Activated T-helper 2 cell treated with anti-CD3 and anti-CD28 coated beads, Interferon-gamma antibody, Interleukin-2, Interleukin-4, amounts not matched to agents 10 μg/mL and 5 μg/mL and 100 μg/mL, durations not matched to agents 14 hours and 24 hours and 36 hours (primary cell): ENCODE measurements at regions of chr1 and their contacts with region 1.

Region 1: DNA sequence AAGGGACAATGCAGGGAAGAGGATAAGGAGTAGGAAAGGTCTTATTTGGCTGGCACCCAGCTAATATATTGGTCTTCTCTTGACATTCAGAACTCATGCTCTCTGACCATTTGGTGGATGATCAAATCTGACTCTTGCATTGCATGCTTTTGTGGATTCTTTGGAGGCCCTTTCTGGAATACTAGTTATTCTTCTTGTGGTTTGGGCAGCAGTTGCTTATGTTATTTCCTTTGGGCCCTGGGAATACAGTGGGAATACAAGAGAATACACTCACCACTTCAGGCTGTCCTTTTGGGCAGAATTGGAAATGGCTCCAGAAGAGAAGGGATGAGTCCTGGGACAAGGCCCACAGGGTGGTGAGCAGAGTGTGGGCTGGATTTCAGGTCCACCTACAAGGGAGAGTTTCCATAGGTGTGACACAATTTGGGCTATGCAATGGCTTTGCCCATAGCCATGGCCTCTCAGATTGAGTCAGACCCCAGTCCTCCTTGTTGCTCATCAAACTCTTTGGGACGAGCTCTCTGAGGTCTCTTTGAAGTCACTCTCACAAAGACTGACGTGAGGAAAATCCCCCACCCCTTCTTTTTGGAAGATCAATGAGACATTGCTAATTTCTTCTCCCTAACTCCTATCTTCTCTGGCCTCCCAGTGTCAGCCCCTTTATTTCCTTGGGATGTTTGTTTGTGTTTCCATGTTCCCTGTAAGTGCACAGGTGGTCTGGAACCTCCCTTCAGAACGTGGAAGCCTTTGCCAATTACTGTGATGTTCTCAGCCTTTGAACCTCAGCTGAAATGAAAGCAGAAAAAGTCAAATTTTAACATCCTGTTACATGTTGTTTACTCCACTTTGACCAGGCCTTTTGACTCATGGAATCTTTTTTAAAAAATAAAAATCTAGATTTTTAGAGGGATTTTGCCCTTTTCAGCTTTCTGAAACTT is 19.4 kb downstream of the HSD11B1 start:
- DNase-seq: peak; percentile 16
- H3K4me3 Mint-ChIP-seq: peak overlapping the region; percentile 60
- H3K27ac Mint-ChIP-seq: peak overlapping the region; percentile 100
- H3K4me1 Mint-ChIP-seq: peaks cover 67% of the 10 kb centered on the region
- H3K27me3 Mint-ChIP-seq: no peaks in the 10 kb centered on the region

Region 2: GRCh38 chr1:209202830-209203439 is 521.1 kb before region 1 on chr1:
- intact Hi-C with region 1: no loop called
- DNase-seq: no peak
- H3K4me3 Mint-ChIP-seq: no peak overlapping the region
- H3K27ac Mint-ChIP-seq: no peak overlapping the region
- H3K4me1 Mint-ChIP-seq: peaks cover 1% of the 10 kb centered on the region
- H3K27me3 Mint-ChIP-seq: peaks cover 16% of the 10 kb centered on the region

Region 3: DNA sequence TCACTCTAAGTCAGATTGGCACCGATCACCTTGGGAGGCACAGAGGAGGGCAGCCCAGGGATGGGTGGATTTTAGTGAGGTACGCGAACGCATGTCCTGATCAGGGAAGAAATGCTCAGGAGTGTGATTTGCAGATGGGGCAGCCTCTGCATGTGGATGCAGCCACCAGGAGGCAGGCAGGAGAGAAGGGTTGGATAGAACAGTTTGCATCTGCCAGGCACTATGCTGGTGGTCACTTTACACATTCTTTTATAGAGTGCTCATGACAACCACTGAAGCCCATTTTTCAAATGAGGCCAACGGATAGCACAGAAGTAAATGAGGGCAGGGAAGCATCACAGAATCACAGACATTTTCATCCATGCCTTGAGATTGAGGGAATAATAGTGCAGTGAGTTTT is 77.5 kb before region 1 on chr1:
- intact Hi-C with region 1: no loop called
- DNase-seq: no peak
- H3K4me3 Mint-ChIP-seq: no peak overlapping the region
- H3K27ac Mint-ChIP-seq: peak overlapping the region; percentile 36
- H3K4me1 Mint-ChIP-seq: peaks cover 40% of the 10 kb centered on the region
- H3K27me3 Mint-ChIP-seq: no peaks in the 10 kb centered on the region

Region 4: DNA sequence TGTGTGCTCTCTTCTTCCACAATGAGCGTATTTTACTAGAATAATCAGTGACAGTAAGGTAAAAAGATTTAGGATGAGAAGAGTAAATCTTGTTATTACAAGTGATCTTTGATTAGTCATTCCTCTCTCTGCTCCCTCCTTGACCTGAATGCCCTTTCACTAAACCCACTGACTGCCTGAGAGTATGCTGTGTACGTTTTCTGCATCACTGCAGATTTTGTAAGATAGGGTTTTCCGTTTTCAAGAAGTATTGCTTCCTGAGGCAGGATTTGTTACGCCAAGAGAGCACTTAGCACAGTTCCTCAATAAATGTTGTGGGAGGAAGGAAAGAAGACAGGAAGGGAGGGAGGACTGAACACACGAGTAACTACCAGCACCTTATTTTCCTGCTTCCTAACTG is 64.1 kb before region 1 on chr1:
- intact Hi-C with region 1: loop called (anchors 2 kb)
- DNase-seq: no peak
- H3K4me3 Mint-ChIP-seq: peak overlapping the region; percentile 16
- H3K27ac Mint-ChIP-seq: peak overlapping the region; percentile 79
- H3K4me1 Mint-ChIP-seq: peaks cover 25% of the 10 kb centered on the region
- H3K27me3 Mint-ChIP-seq: no peaks in the 10 kb centered on the region

Region 5: GRCh38 chr1:209736490-209737117 is 12.6 kb after region 1 on chr1:
- intact Hi-C with region 1: loop called (anchors 1 kb)
- DNase-seq: no peak
- H3K4me3 Mint-ChIP-seq: no peak overlapping the region
- H3K27ac Mint-ChIP-seq: peak overlapping the region; percentile 93
- H3K4me1 Mint-ChIP-seq: peaks cover 54% of the 10 kb centered on the region
- H3K27me3 Mint-ChIP-seq: no peaks in the 10 kb centered on the region